ENCODE measurements at regions of chr7 and their contacts with region 1.

Region 1: DNA sequence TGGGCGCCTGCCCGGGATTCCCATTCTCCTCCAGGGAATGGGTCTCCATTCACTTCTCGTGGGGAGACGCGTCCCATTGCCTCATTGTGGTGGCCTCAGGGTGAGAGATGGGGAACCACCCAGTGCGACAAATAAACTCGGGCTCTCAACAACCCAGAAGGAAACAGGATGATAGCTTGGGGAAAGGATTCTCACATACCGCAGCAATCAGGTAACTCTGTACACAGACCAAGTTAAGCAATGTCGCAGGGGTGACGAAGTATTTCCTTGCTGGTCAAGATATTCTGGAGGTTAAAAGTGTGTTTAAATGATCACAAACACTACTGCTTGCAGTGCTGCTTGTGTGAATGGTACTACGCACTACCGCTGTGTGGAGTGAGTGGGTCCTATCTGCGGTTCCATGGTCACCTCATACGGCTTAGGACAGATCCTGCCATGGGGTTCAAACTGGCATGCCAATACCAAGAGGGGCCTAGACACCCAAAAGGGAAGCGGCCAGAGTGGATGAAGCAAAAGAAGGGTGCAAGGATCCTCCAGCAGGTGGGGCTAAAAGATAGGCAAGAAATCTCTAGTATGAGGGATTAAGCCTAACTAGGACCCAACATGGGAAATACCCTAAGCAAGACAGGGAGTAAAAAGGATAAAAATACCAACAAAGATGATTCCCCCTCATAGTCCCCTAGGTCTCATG is 143.8 kb upstream of the TMEM106B start:
- DNase-seq: peak; percentile 35 to 58
- ATAC-seq: peak; percentile 86

Region 2: DNA sequence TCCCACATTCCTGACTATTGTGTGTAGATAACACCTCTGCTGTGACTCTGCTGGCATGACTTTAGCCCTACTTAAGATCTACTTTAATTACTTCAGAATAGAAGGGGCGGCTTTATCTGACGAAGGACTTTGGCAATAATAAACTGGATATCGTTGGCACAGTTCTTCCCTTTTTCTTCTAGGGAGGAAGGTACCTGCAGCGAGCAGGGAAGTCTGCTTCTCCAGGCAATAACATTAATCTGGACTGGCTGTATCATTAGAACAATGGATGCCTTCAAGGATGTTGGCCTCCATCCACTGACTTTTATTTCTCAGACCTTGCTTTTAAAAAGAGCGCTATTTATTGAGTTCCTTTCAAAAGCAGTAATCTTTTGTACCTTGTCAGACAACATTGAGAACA is 62.7 kb before region 1 on chr7:
- intact Hi-C with region 1: no loop called
- DNase-seq: peak in 1 of 2 donors; percentile 4
- ATAC-seq: peak; percentile 96

Region 3: GRCh38 chr7:12314199-12314598 is 246.9 kb after region 1 on chr7:
- intact Hi-C with region 1: loop called in 1 of 2 experiments (anchors 10 kb)
- DNase-seq: no peak
- ATAC-seq: no peak

Region 4: DNA sequence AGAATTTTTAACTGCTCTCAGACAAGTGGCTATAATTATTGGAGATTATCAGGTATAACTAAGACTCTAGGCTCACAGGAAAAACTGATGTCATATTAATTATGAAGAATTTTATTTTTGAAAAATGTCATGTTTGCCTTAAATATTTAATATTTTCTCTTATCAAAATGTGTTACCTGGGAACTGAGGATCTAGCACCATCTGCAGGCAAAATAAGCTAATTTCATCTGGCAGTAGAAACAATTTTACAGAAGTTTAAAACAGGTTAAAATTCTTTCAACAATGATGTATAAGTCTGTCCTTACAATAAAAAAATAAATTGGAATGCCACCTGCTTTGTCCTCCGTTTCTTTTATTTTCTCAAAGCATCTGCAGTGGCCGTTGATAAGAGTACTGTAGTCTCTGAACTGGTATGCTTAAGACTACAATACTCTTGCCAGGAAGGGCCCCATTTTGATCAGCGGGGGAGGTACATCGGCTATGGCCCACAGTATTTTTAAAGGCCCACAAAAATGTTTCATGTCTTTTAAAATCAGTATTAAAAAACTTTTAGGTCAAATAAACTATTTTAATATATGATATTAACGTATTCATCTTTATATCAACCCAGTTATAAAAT is 255.1 kb after region 1 on chr7:
- intact Hi-C with region 1: loop called (anchors 5 to 10 kb)
- DNase-seq: no peak
- ATAC-seq: no peak